Activated CD4-positive, alpha-beta memory T cell treated with anti-CD3 and anti-CD28 coated beads for 36 hours (primary cell): ENCODE measurements at regions of chr11 and their contacts with region 1.

Region 1: DNA sequence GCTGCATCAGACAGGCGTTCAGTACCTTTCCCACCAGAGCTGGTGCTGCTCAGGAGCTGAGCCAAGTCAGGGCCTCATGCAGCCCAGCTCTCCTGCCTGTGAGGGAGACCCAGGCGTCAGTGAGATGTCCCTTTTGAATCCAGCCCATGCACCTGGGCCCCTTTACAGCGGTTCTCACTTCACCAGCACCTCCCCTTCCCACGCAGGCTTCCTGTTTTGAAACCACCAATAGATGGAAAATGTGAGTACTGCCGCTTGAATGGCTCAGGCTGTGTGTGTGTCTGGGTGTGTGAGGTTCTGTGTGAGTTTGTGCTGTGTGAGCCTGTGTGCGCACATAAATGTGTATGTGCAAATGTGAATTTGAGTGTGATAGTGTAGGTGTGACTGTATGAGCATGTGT is 88.4 kb downstream of the UBASH3B start:
- DNase-seq: peak; percentile 91
- H3K4me3 Mint-ChIP-seq: no peak overlapping the region
- H3K27ac Mint-ChIP-seq: no peak overlapping the region
- H3K4me1 Mint-ChIP-seq: peaks cover 14% of the 10 kb centered on the region
- H3K27me3 Mint-ChIP-seq: no peaks in the 10 kb centered on the region

Region 2: DNA sequence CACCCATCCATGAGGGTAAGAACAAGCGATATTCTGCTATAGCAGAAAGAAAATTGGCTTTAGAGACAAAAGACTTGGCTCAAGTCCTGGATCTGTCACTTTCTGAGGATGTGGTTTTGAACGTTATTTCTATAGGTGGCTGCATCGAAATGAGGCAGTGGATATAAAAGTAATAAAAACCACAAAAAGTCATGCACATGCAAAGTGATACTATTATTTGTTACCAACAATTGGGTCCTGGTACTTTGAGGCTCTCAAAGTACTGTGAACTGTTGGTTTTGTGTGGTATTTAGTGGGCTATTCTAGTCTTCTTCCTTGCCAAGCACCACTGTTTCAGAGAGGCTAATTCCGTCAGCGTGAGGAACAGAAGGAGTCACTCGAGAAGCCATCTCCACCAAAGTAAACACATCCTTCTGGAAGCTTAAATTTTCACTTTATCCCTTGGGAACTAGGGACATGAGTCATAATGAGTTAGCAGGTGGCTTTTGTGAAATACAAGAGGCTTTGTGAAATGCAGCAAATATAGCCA is 75.3 kb before region 1 on chr11:
- CTCF ChIA-PET with region 1: interaction called, 7 read pairs
- POLR2A ChIA-PET with region 1: interaction called, 10 read pairs
- intact Hi-C with region 1: loop called (anchors 1 kb)
- DNase-seq: peak; percentile 22
- H3K4me3 Mint-ChIP-seq: no peak overlapping the region
- H3K27ac Mint-ChIP-seq: peak overlapping the region; percentile 29
- H3K4me1 Mint-ChIP-seq: peaks cover 52% of the 10 kb centered on the region
- H3K27me3 Mint-ChIP-seq: no peaks in the 10 kb centered on the region

Region 3: GRCh38 chr11:122690801-122691548 is 53.0 kb before region 1 on chr11:
- CTCF ChIA-PET with region 1: interaction called, 8 read pairs
- POLR2A ChIA-PET with region 1: interaction called, 12 read pairs
- intact Hi-C with region 1: loop called (anchors 1 kb)
- DNase-seq: peak; percentile 32
- H3K4me3 Mint-ChIP-seq: peak overlapping the region; percentile 56
- H3K27ac Mint-ChIP-seq: peak overlapping the region; percentile 76
- H3K4me1 Mint-ChIP-seq: peaks cover 76% of the 10 kb centered on the region
- H3K27me3 Mint-ChIP-seq: no peaks in the 10 kb centered on the region

Region 4: DNA sequence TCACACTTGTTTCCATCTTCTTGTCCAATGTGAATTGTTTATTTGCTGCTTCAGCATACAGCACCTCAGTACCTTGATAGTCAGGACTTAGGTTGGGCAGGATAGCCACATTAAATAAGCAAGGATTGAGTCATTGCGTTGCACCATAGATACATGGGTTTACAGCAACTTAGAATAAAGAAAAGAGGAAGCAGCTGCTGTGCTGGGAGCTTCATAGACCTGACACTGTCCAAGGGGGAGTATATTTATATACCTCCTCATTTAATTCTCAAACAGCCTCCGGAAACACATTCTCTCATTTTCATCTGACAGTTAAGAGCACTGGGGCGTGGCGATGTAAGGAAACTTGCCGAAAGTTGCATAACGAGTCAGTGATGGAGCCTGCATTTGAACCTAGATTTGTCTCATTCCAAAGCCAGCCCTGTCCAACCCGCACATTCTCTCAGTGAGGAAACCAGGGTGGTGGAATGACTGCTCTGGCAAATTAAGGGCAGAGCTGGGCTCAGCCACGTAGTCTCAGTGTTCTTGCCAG is 46.2 kb before region 1 on chr11:
- CTCF ChIA-PET with region 1: interaction called, 8 read pairs
- POLR2A ChIA-PET with region 1: interaction called, 12 read pairs
- intact Hi-C with region 1: loop called (anchors 1 kb)
- DNase-seq: peak; percentile 65
- H3K4me3 Mint-ChIP-seq: peak overlapping the region; percentile 57
- H3K27ac Mint-ChIP-seq: peak overlapping the region; percentile 75
- H3K4me1 Mint-ChIP-seq: peaks cover 80% of the 10 kb centered on the region
- H3K27me3 Mint-ChIP-seq: no peaks in the 10 kb centered on the region

Region 5: DNA sequence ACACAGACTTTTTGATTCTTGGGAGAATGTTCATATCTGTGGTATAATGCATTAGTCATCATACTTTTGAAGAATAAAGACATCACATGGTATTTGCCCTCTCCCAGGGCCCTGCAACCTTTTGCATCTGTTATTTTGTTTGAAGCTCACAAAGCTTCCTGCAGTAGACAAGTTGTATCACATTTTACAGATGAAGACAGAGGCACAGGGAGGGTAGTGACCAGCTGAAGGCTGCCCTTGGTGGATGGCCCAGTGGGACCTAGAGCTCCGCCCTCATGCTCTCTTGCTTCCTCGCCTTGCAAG is 22.0 kb before region 1 on chr11:
- CTCF ChIA-PET with region 1: interaction called, 11 read pairs
- POLR2A ChIA-PET with region 1: interaction called, 11 read pairs
- intact Hi-C with region 1: loop called (anchors 1 kb)
- DNase-seq: peak; percentile 32
- H3K4me3 Mint-ChIP-seq: no peak overlapping the region
- H3K27ac Mint-ChIP-seq: no peak overlapping the region
- H3K4me1 Mint-ChIP-seq: peaks cover 56% of the 10 kb centered on the region
- H3K27me3 Mint-ChIP-seq: no peaks in the 10 kb centered on the region

Region 6: DNA sequence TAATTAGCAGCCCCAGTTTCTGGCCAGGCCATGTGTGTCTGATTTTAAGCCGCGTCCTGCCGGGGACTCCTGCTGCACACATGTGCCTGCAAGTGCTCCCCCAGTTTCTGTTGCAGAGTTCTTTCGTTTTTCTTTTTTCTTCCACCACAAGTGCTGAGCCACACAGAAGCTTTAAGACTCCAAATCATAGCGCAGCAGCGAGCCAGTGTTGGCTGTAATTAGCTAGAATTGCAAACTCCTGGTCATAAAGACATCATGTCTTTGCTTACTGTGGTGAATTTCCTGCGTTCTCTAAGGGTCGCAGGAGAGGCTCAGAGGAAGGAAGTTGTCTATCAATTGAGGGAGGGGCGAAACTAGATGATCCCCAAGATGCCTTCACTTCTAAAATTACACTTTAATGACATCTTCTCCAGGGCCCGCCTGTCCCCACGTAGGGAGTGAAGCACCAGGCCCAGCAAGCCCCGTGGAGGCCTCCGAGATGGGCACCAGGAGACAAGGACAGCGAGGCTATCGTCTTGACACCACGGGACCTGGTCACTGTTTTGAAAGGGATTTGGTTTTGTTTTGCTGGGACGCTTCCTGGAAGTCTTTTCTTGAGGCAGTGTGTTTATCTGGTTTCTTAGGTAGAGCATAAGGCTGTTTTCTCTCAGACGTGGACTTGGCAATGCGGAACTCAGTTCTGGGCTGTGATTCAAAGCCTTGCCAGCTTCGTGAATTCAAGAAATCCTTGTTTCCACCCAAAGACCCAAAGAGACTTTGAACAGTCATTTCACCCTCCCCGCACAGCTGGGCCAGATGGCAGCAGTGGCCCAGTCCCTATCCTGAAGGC is 16.6 kb before region 1 on chr11:
- CTCF ChIA-PET with region 1: interaction called, 11 read pairs
- POLR2A ChIA-PET with region 1: interaction called, 11 read pairs
- intact Hi-C with region 1: loop called (anchors 1 kb)
- DNase-seq: peak; percentile 76
- H3K4me3 Mint-ChIP-seq: peak overlapping the region; percentile 53
- H3K27ac Mint-ChIP-seq: peak overlapping the region; percentile 71
- H3K4me1 Mint-ChIP-seq: peaks cover 63% of the 10 kb centered on the region
- H3K27me3 Mint-ChIP-seq: no peaks in the 10 kb centered on the region

Region 7: GRCh38 chr11:122814401-122814800 is 70.5 kb after region 1 on chr11:
- CTCF ChIA-PET with region 1: no interaction called
- POLR2A ChIA-PET with region 1: no interaction called
- intact Hi-C with region 1: no loop called
- DNase-seq: no peak
- H3K4me3 Mint-ChIP-seq: no peak overlapping the region
- H3K27ac Mint-ChIP-seq: no peak overlapping the region
- H3K4me1 Mint-ChIP-seq: peaks cover 9% of the 10 kb centered on the region
- H3K27me3 Mint-ChIP-seq: no peaks in the 10 kb centered on the region